B cell (primary cell): ENCODE measurements at regions of chr6 and their contacts with region 1.

Region 1: DNA sequence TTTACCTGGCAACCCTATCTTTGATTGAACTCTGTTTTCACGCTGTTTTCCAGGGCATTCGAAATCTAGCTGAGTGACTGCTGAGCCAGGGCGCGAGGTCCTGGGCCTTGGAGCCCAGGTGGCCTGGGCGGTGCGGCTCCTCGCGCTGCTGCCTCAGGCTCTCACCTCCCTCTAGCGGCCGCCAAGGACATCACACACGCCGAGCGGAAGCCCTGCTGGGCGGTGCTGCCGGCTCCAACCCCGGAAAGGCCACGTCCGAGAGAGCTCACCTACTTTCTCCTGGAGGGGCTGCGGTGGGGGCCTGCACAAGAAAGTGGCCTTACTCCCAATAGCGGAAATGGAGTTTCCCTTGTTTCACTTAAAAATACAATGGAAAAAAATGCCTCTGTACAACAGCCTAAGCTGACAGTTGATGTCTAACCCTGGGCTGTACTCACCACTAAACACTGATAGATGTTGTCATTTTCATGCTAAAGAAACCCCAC is 77.7 kb downstream of the ELOVL4 start:
- DNase-seq: peak; percentile 83
- ATAC-seq: peak; percentile 100
- H3K4me3 ChIP-seq: peak overlapping the region in 3 of 5 experiments; percentile 27 to 52 (median 38)
- H3K4me3 Mint-ChIP-seq: peak overlapping the region; percentile 61
- H3K27ac ChIP-seq: no peak overlapping the region
- H3K27ac Mint-ChIP-seq: peak overlapping the region; percentile 59
- H3K4me1 ChIP-seq: peaks cover 4 to 9% of the 10 kb centered on the region in 2 donors
- H3K4me1 Mint-ChIP-seq: peaks cover 7% of the 10 kb centered on the region
- H3K27me3 ChIP-seq: peaks cover 0 to 8% (median 0%) of the 10 kb centered on the region in 4 experiments
- H3K27me3 Mint-ChIP-seq: peaks cover 4% of the 10 kb centered on the region
- CTCF ChIP-seq: peak; percentile 98

Region 2: DNA sequence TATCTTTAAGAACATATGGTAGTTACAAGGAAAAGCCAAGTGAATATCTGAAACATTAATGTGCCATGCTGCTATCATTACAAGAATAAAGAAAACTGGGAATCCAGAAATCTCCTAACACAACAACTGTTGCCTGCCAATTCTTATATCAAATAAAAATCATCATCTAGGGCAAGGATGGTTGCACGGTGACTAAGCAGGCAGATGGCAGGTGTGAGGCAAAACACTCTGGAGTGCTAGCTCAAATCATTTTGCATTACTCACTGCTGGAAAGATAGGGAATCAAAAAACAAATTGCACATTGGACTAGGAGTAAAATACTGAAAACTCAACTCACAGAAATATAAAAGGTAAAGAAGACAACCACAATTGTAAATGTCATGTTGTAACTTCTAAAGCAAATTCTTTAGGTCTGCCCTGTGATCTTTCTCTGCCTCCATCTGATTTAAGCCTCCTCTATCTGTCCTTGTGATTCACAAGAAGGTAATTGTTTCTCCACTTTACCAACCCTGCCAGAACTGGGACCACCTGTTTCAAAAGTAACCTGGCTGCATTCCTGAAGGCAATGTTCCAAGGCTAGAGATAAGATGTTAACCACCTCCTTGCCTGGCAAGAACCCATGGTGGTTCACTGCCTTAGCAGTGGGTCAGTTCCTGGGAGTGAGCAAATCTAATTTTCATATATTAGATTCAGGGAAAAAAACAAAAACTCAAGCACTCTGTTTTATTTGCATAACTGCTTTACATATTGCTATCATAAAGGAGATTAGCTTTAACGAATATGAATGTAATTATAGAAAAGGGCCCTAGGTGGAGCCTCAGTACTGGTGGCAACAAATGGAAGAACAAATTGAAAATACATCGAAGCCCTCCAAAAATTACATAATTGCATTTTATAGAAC is 299.3 kb before region 1 on chr6:
- CTCF ChIA-PET with region 1: no interaction called
- POLR2A ChIA-PET with region 1: no interaction called
- intact Hi-C with region 1: loop called (anchors 2 kb)
- DNase-seq: peak; percentile 24
- ATAC-seq: peak; percentile 10
- H3K4me3 ChIP-seq: no peak overlapping the region
- H3K4me3 Mint-ChIP-seq: no peak overlapping the region
- H3K27ac ChIP-seq: no peak overlapping the region
- H3K27ac Mint-ChIP-seq: no peak overlapping the region
- H3K4me1 ChIP-seq: no peaks in the 10 kb centered on the region
- H3K4me1 Mint-ChIP-seq: peaks cover 7% of the 10 kb centered on the region
- H3K27me3 ChIP-seq: no peaks in the 10 kb centered on the region
- H3K27me3 Mint-ChIP-seq: peaks cover 10% of the 10 kb centered on the region
- CTCF ChIP-seq: peak; percentile 64

Region 3: GRCh38 chr6:79855147-79855546 is 14.5 kb before region 1 on chr6:
- CTCF ChIA-PET with region 1: interaction called, 10 read pairs
- POLR2A ChIA-PET with region 1: no interaction called
- intact Hi-C with region 1: no loop called
- DNase-seq: no peak
- ATAC-seq: no peak
- H3K4me3 ChIP-seq: no peak overlapping the region
- H3K4me3 Mint-ChIP-seq: no peak overlapping the region
- H3K27ac ChIP-seq: no peak overlapping the region
- H3K27ac Mint-ChIP-seq: no peak overlapping the region
- H3K4me1 ChIP-seq: no peaks in the 10 kb centered on the region
- H3K4me1 Mint-ChIP-seq: no peaks in the 10 kb centered on the region
- H3K27me3 ChIP-seq: no peaks in the 10 kb centered on the region
- H3K27me3 Mint-ChIP-seq: peaks cover 5% of the 10 kb centered on the region
- CTCF ChIP-seq: no peak

Region 4: GRCh38 chr6:79949233-79949632 is 79.6 kb after region 1 on chr6:
- CTCF ChIA-PET with region 1: no interaction called
- POLR2A ChIA-PET with region 1: no interaction called
- intact Hi-C with region 1: no loop called
- DNase-seq: peak; percentile 63
- ATAC-seq: no peak
- H3K4me3 ChIP-seq: no peak overlapping the region
- H3K4me3 Mint-ChIP-seq: no peak overlapping the region
- H3K27ac ChIP-seq: no peak overlapping the region
- H3K27ac Mint-ChIP-seq: no peak overlapping the region
- H3K4me1 ChIP-seq: peaks cover 18 to 21% of the 10 kb centered on the region in 2 donors
- H3K4me1 Mint-ChIP-seq: peaks cover 19% of the 10 kb centered on the region
- H3K27me3 ChIP-seq: peaks cover 0 to 42% (median 36%) of the 10 kb centered on the region in 4 experiments
- H3K27me3 Mint-ChIP-seq: peaks cover 50% of the 10 kb centered on the region
- CTCF ChIP-seq: peak; percentile 61

Region 5: DNA sequence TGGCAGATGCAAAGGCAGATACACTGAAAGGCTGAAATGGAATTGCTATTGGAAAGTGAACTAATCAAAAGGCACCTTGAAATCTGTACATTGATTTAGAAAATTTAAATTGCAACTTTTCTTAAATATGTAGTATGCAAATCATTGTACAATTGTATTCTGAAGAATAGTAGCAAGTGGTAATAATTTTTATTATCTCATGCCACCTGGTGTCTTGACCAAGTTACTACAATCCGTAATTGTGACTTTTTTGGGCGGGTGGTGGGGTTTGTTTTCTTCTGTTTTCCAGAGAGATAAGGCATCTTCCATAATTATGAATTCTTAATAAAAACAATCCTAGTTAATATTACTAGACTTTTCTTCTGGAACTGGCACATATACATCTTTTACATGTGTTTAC is 224.4 kb after region 1 on chr6:
- CTCF ChIA-PET with region 1: interaction called, 4 read pairs
- POLR2A ChIA-PET with region 1: no interaction called
- intact Hi-C with region 1: loop called (anchors 5 kb)
- DNase-seq: peak; percentile 41
- ATAC-seq: peak; percentile 41
- H3K4me3 ChIP-seq: no peak overlapping the region
- H3K4me3 Mint-ChIP-seq: no peak overlapping the region
- H3K27ac ChIP-seq: no peak overlapping the region
- H3K27ac Mint-ChIP-seq: no peak overlapping the region
- H3K4me1 ChIP-seq: peaks cover 0 to 3% of the 10 kb centered on the region in 2 donors
- H3K4me1 Mint-ChIP-seq: peaks cover under 1% of the 10 kb centered on the region
- H3K27me3 ChIP-seq: peaks cover 0 to 4% (median 0%) of the 10 kb centered on the region in 4 experiments
- H3K27me3 Mint-ChIP-seq: peaks cover 27% of the 10 kb centered on the region
- CTCF ChIP-seq: peak; percentile 77